CD4-positive, alpha-beta T cell (primary cell): ENCODE measurements at regions of chr17 and their contacts with region 1.

Region 1: GRCh38 chr17:61412143-61412859 is 12.7 kb downstream of the TBX2 start:
- DNase-seq: peak; percentile 43 to 89 (median 74)
- ATAC-seq: peak; percentile 81
- H3K4me3 ChIP-seq: peak overlapping the region; percentile 66
- H3K4me3 Mint-ChIP-seq: peak overlapping the region; percentile 58
- H3K27ac ChIP-seq: no peak overlapping the region
- H3K27ac Mint-ChIP-seq: no peak overlapping the region
- H3K4me1 ChIP-seq: peaks cover 67% of the 10 kb centered on the region
- H3K4me1 Mint-ChIP-seq: peaks cover 25% of the 10 kb centered on the region
- H3K27me3 ChIP-seq: peaks cover 36 to 39% of the 10 kb centered on the region in 2 experiments
- H3K27me3 Mint-ChIP-seq: peaks cover 50% of the 10 kb centered on the region
- CTCF ChIP-seq: peak; percentile 98

Region 2: DNA sequence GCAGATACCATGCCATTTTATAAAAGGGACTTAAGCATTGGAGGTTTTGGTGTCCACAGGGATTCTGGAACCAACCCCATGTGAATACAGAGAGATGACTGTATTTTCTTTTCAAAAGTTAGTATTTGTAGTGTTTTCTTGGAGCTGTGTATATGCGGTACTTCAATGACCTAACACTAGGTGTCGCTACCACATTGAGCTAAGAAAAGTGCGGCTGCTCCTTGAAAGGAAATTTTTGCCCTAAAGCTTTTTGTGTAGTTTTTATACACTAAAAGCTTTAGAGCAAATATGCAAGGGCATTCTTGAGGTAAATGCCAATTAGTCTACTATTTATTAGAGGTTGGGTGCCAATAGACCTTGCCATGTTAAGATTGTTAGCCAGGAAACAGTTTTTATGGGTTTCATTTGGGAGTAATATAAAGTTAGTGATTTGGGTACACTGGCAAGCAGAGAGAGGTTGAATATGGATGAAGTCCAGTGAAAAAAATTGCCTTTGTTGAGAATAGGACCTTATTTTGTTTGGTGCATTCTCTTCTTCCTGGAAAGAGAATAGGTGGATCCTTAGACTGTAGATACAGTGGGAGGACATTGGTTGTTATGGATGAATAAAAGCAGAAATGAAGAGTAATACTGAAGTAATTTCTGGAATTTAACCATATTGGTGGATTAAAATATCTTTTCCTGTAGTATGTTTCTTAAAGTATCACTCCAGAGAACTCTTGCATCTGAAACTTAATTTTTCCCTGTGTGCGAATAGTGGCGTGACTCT is 691.4 kb before region 1 on chr17:
- CTCF ChIA-PET with region 1: no interaction called
- POLR2A ChIA-PET with region 1: no interaction called
- intact Hi-C with region 1: loop called (anchors 5 to 10 kb)
- DNase-seq: peak in 9 of 14 experiments; percentile 0 to 77 (median 13)
- ATAC-seq: peak; percentile 55
- H3K4me3 ChIP-seq: no peak overlapping the region
- H3K4me3 Mint-ChIP-seq: no peak overlapping the region
- H3K27ac ChIP-seq: no peak overlapping the region
- H3K27ac Mint-ChIP-seq: no peak overlapping the region
- H3K4me1 ChIP-seq: no peaks in the 10 kb centered on the region
- H3K4me1 Mint-ChIP-seq: peaks cover 3% of the 10 kb centered on the region
- H3K27me3 ChIP-seq: no peaks in the 10 kb centered on the region
- H3K27me3 Mint-ChIP-seq: no peaks in the 10 kb centered on the region
- CTCF ChIP-seq: peak; percentile 88

Region 3: GRCh38 chr17:61139219-61139618 is 273.1 kb before region 1 on chr17:
- CTCF ChIA-PET with region 1: no interaction called
- POLR2A ChIA-PET with region 1: no interaction called
- intact Hi-C with region 1: loop called in 1 of 2 experiments (anchors 10 kb)
- DNase-seq: peak; percentile 25 to 91 (median 49)
- ATAC-seq: peak; percentile 98
- H3K4me3 ChIP-seq: no peak overlapping the region
- H3K4me3 Mint-ChIP-seq: peak overlapping the region; percentile 52
- H3K27ac ChIP-seq: peak overlapping the region in 1 of 2 donors; percentile 38
- H3K27ac Mint-ChIP-seq: peak overlapping the region; percentile 31
- H3K4me1 ChIP-seq: peaks cover 13% of the 10 kb centered on the region
- H3K4me1 Mint-ChIP-seq: peaks cover 43% of the 10 kb centered on the region
- H3K27me3 ChIP-seq: no peaks in the 10 kb centered on the region
- H3K27me3 Mint-ChIP-seq: no peaks in the 10 kb centered on the region
- CTCF ChIP-seq: no peak

Region 4: DNA sequence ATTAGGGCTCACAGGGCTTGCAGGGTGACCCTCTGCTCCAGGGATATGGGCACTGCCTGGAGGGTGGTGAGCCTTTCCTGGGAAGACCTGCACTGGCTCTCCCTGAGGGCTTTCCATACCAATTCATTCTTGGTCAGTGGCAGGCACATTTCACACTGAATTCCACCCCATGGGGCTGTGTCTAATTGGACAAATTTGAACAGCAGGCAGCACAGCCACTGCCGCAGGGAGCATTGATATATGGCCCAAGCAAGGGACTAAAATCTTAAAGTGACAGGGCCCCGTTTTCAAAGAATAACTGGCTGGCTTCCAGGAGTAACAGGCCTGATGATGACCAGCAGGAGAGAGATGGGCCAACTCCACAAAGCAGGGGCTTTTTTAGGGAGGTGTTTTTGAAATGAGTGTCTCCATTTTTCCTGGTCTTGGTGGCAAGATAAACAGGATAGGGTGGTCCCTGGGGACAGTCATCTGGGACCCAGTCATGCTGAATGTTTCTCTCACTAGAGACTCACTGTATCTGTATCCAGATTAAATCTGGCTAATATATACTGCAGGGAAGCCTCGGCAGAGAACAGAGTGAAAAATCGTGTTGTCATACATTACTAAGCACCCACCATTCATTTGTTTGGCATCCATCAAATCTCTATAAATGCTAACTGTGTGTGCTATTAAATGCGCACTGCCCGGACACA is 86.8 kb before region 1 on chr17:
- CTCF ChIA-PET with region 1: no interaction called
- POLR2A ChIA-PET with region 1: no interaction called
- intact Hi-C with region 1: no loop called
- DNase-seq: no peak
- ATAC-seq: no peak
- H3K4me3 ChIP-seq: no peak overlapping the region
- H3K4me3 Mint-ChIP-seq: no peak overlapping the region
- H3K27ac ChIP-seq: no peak overlapping the region
- H3K27ac Mint-ChIP-seq: no peak overlapping the region
- H3K4me1 ChIP-seq: no peaks in the 10 kb centered on the region
- H3K4me1 Mint-ChIP-seq: no peaks in the 10 kb centered on the region
- H3K27me3 ChIP-seq: no peaks in the 10 kb centered on the region
- H3K27me3 Mint-ChIP-seq: no peaks in the 10 kb centered on the region
- CTCF ChIP-seq: no peak

Region 5: GRCh38 chr17:61349350-61349749 is 63.0 kb before region 1 on chr17:
- CTCF ChIA-PET with region 1: no interaction called
- POLR2A ChIA-PET with region 1: no interaction called
- intact Hi-C with region 1: no loop called
- DNase-seq: peak in 1 of 14 experiments; percentile 4
- ATAC-seq: no peak
- H3K4me3 ChIP-seq: no peak overlapping the region
- H3K4me3 Mint-ChIP-seq: no peak overlapping the region
- H3K27ac ChIP-seq: no peak overlapping the region
- H3K27ac Mint-ChIP-seq: no peak overlapping the region
- H3K4me1 ChIP-seq: no peaks in the 10 kb centered on the region
- H3K4me1 Mint-ChIP-seq: no peaks in the 10 kb centered on the region
- H3K27me3 ChIP-seq: no peaks in the 10 kb centered on the region
- H3K27me3 Mint-ChIP-seq: no peaks in the 10 kb centered on the region
- CTCF ChIP-seq: no peak

Region 6: DNA sequence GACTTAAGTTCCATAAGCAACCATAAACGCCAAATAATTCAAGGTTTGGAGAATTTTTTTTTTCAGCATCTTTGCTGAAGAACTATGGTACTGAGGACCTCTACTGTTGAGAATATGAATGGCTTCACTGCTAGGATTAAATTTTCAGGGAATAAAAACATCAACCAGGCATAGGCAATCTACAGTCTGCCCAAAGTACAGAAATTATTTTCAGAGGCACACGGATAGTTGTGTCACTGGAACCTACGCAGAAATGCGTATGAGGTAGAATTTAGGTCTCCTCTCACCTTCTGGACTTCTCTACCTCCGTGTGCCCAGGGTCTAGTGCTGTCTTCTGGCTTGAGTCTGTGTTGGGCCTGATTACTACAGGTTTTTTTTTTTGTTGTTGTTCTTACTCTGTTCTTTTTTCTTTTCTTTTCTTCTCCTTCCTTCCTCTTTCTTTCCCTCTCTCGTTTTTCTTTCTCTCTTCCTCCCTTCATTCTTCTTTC is 139.0 kb after region 1 on chr17:
- CTCF ChIA-PET with region 1: no interaction called
- POLR2A ChIA-PET with region 1: no interaction called
- intact Hi-C with region 1: loop called in 1 of 2 experiments (anchors 2 kb)
- DNase-seq: peak in 3 of 14 experiments; percentile 11 to 23 (median 19)
- ATAC-seq: no peak
- H3K4me3 ChIP-seq: no peak overlapping the region
- H3K4me3 Mint-ChIP-seq: no peak overlapping the region
- H3K27ac ChIP-seq: no peak overlapping the region
- H3K27ac Mint-ChIP-seq: no peak overlapping the region
- H3K4me1 ChIP-seq: no peaks in the 10 kb centered on the region
- H3K4me1 Mint-ChIP-seq: no peaks in the 10 kb centered on the region
- H3K27me3 ChIP-seq: peaks cover 3 to 46% of the 10 kb centered on the region in 2 experiments
- H3K27me3 Mint-ChIP-seq: peaks cover 63% of the 10 kb centered on the region
- CTCF ChIP-seq: no peak

Region 7: DNA sequence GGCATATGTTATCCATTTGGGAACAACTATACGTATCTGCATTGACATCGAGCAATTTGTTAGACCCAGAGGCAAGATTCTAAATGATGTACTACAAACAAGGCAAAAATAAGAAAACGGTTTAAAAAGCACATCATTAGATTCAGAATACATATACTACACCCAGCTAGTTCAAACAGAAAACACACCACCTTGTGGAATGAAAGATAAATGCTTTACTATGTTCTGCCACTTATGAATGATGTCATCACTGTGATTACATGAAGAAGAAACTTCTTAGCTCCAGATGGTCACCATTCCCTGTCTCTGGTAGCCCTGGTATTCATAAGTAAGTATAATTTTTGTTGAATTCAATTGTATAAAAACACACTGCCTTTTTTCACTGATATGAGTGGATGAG is 170.9 kb after region 1 on chr17:
- CTCF ChIA-PET with region 1: no interaction called
- POLR2A ChIA-PET with region 1: no interaction called
- intact Hi-C with region 1: loop called in 1 of 2 experiments (anchors 1 kb)
- DNase-seq: peak in 2 of 14 experiments; percentile 1 to 3
- ATAC-seq: no peak
- H3K4me3 ChIP-seq: no peak overlapping the region
- H3K4me3 Mint-ChIP-seq: no peak overlapping the region
- H3K27ac ChIP-seq: no peak overlapping the region
- H3K27ac Mint-ChIP-seq: no peak overlapping the region
- H3K4me1 ChIP-seq: no peaks in the 10 kb centered on the region
- H3K4me1 Mint-ChIP-seq: no peaks in the 10 kb centered on the region
- H3K27me3 ChIP-seq: peaks cover 0 to 10% of the 10 kb centered on the region in 2 experiments
- H3K27me3 Mint-ChIP-seq: peaks cover 42% of the 10 kb centered on the region
- CTCF ChIP-seq: no peak

Region 8: DNA sequence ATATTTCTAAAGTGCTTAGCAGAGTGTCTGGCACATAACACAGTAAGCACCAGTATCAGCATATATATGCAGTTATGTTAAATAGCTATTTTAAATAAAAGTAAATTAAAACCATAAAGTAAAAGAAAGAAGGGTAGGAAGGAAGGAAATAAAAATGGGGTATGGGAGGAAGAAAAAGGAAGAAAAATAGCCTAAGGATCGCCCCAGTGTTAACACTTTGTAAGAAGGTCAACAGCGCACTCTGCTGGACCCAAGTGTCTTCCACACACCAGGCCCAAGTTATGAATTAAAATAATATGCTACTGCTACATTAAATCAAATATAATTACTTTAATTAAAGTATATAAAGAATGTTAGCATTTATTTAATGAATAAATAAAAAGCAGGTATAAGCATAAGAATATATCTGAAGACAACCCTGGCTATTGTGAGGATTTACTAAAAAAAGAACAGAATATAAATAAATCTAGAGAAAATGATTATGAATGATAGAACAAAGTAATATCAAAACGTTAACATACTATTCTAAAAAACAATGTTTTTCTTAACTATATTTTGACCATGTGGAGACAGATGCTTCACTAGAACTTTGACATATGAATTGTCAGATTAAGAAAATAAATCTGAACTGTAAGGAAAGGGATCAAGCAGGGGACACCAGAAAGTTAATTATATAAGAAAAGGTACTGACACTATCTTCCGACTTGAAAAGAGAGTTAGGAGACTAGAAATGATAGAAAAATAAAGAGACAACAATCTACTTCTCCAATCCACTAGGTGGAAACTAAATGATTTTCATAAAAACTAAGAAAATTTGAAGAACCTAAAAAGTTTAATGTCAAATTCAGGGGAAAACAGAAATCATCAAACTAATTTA is 425.1 kb after region 1 on chr17:
- CTCF ChIA-PET with region 1: interaction called, 11 read pairs
- POLR2A ChIA-PET with region 1: no interaction called
- intact Hi-C with region 1: loop called (anchors 2 to 5 kb)
- DNase-seq: peak; percentile 9 to 74 (median 38)
- ATAC-seq: peak; percentile 43
- H3K4me3 ChIP-seq: no peak overlapping the region
- H3K4me3 Mint-ChIP-seq: no peak overlapping the region
- H3K27ac ChIP-seq: no peak overlapping the region
- H3K27ac Mint-ChIP-seq: no peak overlapping the region
- H3K4me1 ChIP-seq: no peaks in the 10 kb centered on the region
- H3K4me1 Mint-ChIP-seq: no peaks in the 10 kb centered on the region
- H3K27me3 ChIP-seq: no peaks in the 10 kb centered on the region
- H3K27me3 Mint-ChIP-seq: no peaks in the 10 kb centered on the region
- CTCF ChIP-seq: peak; percentile 65

Region 9: GRCh38 chr17:61927200-61928165 is 515.2 kb after region 1 on chr17 and contains the start of gene INTS2:
- CTCF ChIA-PET with region 1: no interaction called
- POLR2A ChIA-PET with region 1: no interaction called
- intact Hi-C with region 1: loop called in 1 of 2 experiments (anchors 10 kb)
- DNase-seq: peak; percentile 91 to 98 (median 95)
- ATAC-seq: peak; percentile 84
- H3K4me3 ChIP-seq: peak within 1 kb of the TSS; percentile 62
- H3K4me3 Mint-ChIP-seq: peak within 1 kb of the TSS; percentile 94
- H3K27ac ChIP-seq: peak within 1 kb of the TSS; percentile 68 to 78
- H3K27ac Mint-ChIP-seq: peak within 1 kb of the TSS; percentile 93
- H3K4me1 ChIP-seq: peaks cover 18% of the 10 kb centered on the region
- H3K4me1 Mint-ChIP-seq: peaks cover 27% of the 10 kb centered on the region
- H3K27me3 ChIP-seq: no peaks in the 10 kb centered on the region
- H3K27me3 Mint-ChIP-seq: peaks cover 6% of the 10 kb centered on the region
- CTCF ChIP-seq: no peak
- total RNA-seq, gene INTS2: 8.5 to 8.7 TPM